ENCODE measurements at regions of chr11 and their contacts with region 1.

Region 1: DNA sequence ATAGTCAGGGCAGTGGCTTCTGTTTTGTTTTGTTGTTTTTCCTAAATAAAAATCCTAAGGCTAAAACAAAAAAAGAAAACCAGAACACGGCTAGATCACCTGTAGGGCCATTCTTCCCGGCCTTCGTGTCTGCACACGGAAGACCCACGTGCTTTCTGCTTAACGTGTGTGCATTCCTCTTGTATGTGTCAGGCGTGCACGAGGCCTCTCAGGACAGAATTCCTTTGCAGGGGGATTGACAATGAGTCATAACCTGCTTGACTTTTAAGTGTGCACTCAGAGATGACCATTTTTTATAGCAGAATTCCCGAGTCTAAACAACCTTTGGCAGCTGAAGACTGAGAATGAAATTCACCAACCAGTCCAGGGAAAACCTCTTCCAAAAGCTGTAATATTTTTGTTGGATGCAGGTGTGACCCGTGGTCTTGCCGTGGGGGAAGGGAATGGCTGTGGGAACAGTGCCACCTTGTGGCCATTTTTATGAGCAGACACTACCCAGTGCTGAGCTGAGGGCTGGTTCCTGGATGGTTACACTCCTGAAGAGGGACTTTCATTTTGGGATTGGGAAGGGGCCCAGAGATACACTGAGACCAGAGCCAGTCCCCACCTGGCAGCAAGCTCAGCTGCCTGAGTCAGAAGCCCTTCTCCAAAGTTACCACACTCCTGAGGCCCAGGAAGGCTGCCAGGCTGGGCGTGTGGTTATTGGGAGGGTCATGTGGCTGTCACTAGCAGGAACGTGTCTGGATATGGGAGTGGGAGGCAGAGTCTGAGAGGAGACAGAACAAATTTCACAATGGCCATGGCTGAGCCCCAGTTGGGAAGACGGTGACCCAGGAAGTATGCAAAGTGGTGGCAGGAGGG is 35.8 kb upstream of the DKK3 start:
- DNase-seq: peak; percentile 84 to 95
- H3K4me3 ChIP-seq: peak overlapping the region in 1 of 2 donors; percentile 6
- H3K27ac ChIP-seq: peak overlapping the region; percentile 75
- H3K4me1 ChIP-seq: peaks cover 0 to 13% of the 10 kb centered on the region in 2 donors
- H3K27me3 ChIP-seq: no peaks in the 10 kb centered on the region
- CTCF ChIP-seq: peak; percentile 84 to 94 (median 89)

Region 2: DNA sequence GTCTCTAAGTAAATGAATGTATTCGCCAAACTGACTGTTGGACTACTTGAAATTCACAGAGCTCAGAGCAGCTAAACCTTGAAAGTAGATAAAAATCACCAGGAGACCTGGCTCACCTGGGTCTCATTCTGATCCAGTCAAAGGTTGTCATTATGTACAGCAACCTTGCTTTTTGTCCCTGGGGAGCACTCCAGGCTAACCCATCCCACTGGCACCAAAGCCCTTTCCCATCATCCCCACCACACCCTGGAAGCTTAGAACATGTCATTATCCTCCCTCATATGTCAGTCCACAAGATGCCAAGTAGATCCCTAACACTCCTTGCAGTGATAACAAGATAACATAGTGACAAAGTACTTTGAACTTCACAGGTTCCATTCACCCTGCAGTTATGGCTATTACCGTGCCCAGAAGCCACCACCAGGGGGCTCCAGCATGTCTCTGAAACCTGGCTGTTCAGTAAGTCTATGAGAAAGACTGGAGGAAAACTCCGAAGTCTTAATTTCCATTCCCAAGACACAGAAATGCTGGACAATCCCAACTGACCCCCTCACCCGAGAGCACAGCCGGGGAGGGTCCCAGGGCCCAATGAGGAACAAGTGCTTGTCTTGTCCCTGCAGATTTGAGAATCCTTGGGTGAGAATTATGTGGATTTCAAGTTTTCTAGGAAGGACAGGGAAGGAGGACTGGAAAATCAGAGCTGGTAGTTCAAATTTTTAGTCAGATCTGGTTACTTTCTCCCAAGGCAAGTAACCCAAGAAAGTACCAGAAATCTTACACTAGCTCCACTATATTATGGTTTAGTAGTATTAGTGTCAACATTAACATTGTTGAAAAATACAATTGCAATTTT is 245.4 kb before region 1 on chr11:
- intact Hi-C with region 1: loop called (anchors 1 kb)
- DNase-seq: peak; percentile 51 to 93
- H3K4me3 ChIP-seq: no peak overlapping the region
- H3K27ac ChIP-seq: no peak overlapping the region
- H3K4me1 ChIP-seq: peaks cover 2 to 3% of the 10 kb centered on the region in 2 donors
- H3K27me3 ChIP-seq: no peaks in the 10 kb centered on the region
- CTCF ChIP-seq: peak; percentile 77 to 89 (median 80)

Region 3: DNA sequence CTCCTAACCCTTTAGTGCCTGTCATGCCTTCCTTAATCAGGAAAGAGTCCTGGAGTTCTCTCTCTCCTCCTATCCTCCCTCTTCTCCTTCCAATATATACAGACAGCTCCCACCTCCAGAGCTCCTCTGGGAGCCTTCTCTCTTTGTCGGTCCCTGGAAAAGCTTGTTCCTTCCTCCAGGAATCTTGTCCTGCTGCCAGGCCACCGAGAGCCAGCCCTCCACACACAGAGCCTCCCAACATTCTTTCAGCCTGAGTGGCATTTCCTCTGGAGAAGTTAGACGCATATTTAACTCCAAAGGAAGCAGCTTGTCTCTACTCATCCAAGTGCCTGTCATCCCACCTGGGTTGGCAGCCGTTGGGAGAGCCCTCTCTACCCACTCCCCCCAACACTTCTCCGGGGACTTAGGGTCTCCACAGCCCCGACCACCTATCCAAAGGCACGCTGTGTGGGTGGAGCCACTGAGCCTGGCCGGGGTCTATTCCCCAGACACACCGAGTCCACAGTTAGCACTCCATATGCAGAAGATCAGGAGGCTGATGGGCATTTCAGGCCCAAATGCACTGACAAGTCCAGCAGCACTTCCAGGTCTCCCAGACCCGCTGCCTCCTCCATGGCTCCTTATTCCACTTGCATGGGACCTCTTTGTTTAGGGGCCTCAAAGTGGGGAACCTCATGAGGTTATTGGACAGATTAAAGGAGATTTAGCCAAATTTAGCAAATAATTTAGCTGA is 66.8 kb before region 1 on chr11:
- intact Hi-C with region 1: loop called (anchors 1 kb)
- DNase-seq: peak in 1 of 2 donors; percentile 92
- H3K4me3 ChIP-seq: peak overlapping the region in 1 of 2 donors; percentile 17
- H3K27ac ChIP-seq: peak overlapping the region; percentile 81 to 83
- H3K4me1 ChIP-seq: peaks cover 43 to 90% of the 10 kb centered on the region in 2 donors
- H3K27me3 ChIP-seq: no peaks in the 10 kb centered on the region
- CTCF ChIP-seq: no peak

Region 4: GRCh38 chr11:12017243-12017678 is 26.9 kb before region 1 on chr11:
- intact Hi-C with region 1: loop called (anchors 2 kb)
- DNase-seq: peak in 1 of 2 donors; percentile 85
- H3K4me3 ChIP-seq: no peak overlapping the region
- H3K27ac ChIP-seq: peak overlapping the region; percentile 72 to 78
- H3K4me1 ChIP-seq: peaks cover 16 to 33% of the 10 kb centered on the region in 2 donors
- H3K27me3 ChIP-seq: no peaks in the 10 kb centered on the region
- CTCF ChIP-seq: no peak

Region 5: DNA sequence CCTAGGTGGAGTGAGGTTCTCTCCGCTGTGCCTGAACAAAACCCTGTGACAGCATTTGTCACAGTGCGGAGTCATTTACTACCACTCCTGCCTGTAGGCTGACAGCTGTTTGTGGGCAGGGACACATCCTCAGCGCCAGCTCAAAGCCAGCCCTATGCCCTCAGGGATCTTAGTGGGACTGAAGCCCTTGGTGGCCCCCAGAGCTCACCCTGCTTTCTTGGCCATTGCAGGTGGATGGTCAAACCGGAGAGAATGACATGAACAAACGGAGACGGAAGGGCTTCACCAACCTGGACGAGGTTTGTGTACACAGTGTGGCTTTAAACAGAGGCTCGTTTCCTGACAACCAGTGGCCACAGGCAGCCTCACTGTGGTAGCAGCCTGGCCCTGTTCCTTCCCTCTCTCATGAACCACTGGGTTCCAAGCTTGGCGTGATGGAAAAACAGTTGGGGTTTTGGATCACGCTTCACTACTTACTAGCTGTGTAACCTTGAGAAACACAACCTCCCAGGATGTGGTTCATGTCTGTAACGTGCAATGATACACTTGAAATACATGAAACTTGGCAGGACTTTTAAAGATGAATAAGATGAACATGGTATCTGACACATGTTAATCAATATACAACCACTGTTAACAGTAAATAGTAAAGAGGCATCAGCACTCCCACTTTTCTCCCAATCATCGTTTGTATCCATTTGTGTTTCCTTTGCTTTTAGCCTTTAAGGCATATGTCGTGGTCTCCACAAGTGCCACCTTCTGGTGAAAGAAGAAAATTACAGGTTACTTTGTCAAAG is 192.0 kb after region 1 on chr11:
- intact Hi-C with region 1: loop called (anchors 2 kb)
- DNase-seq: peak in 1 of 2 donors; percentile 77
- H3K4me3 ChIP-seq: no peak overlapping the region
- H3K27ac ChIP-seq: peak overlapping the region; percentile 94 to 98
- H3K4me1 ChIP-seq: peaks cover 17 to 92% of the 10 kb centered on the region in 2 donors
- H3K27me3 ChIP-seq: no peaks in the 10 kb centered on the region
- CTCF ChIP-seq: peak; percentile 60 to 64 (median 60)

Region 6: DNA sequence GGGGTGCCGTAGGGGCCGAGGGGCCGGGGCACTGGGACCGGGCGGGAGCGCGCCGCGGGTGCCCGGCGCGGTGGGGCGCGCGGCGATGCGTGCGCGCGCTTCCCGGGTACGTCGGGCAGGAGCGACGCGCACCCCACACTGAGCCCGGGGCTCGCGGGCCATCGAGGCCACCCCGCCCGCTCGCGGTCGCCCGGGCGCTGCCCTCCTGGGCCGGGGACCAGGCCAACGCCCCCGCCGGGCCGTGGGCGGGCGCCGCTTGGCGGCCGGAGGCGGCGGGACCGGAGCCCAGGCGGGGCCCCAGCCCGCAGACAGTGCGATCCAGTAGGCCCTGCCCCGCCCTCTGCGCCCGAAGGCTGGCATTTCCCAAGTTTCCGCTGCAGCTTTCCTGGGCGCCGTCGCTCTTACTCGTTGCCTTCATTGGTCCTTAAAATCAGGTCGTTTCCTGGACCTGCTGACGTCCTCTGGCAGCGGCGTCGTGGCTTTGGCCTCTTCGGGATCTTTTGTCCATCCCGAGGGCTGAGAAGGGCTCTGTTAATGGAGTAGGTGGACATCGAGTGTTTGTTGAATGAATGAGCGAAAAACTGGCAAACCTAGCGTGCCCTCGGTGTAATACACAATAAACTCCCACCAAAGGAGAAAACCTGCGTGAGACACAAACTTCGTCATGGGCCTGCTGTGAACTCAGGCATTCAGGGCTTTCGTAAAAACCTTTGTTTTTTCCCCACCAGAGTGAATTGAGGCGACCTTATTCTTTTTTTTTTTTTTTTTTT is 333.8 kb after region 1 on chr11:
- intact Hi-C with region 1: loop called (anchors 2 kb)
- DNase-seq: peak in 1 of 2 donors; percentile 91
- H3K4me3 ChIP-seq: peak overlapping the region; percentile 88
- H3K27ac ChIP-seq: peak overlapping the region; percentile 97
- H3K4me1 ChIP-seq: peaks cover 0 to 21% of the 10 kb centered on the region in 2 donors
- H3K27me3 ChIP-seq: no peaks in the 10 kb centered on the region
- CTCF ChIP-seq: peak in 2 of 3 experiments; percentile 5 to 18